Activated T-helper 1 cell treated with anti-CD3 and anti-CD28 coated beads, Interleukin-12 subunit alpha, Interleukin-12 subunit beta, Interleukin-2, Interleukin-4 antibody, amounts not matched to agents 30 ng/mL and 10 ng/mL and 1 ng/mL, durations not matched to agents 14 hours and 24 hours and 36 hours (primary cell): ENCODE measurements at regions of chr1 and their contacts with region 1.

Region 1: GRCh38 chr1:33367485-33368405 is 46.8 kb upstream of the A3GALT2 start:
- DNase-seq: peak; percentile 73
- H3K4me3 Mint-ChIP-seq: no peak overlapping the region
- H3K27ac Mint-ChIP-seq: no peak overlapping the region
- H3K4me1 Mint-ChIP-seq: no peaks in the 10 kb centered on the region
- H3K27me3 Mint-ChIP-seq: peaks cover 2% of the 10 kb centered on the region

Region 2: GRCh38 chr1:32870615-32871363 is 497.0 kb before region 1 on chr1 and contains the start of gene FNDC5:
- intact Hi-C with region 1: no loop called
- DNase-seq: no peak
- H3K4me3 Mint-ChIP-seq: peak within 1 kb of the TSS; percentile 56
- H3K27ac Mint-ChIP-seq: no peak within 1 kb of the TSS
- H3K4me1 Mint-ChIP-seq: peaks cover 6% of the 10 kb centered on the region
- H3K27me3 Mint-ChIP-seq: peaks cover 48% of the 10 kb centered on the region
- total RNA-seq, gene FNDC5: not detected in 2 replicates

Region 3: GRCh38 chr1:33111970-33112369 is 255.8 kb before region 1 on chr1:
- intact Hi-C with region 1: loop called (anchors 2 kb)
- DNase-seq: no peak
- H3K4me3 Mint-ChIP-seq: no peak overlapping the region
- H3K27ac Mint-ChIP-seq: no peak overlapping the region
- H3K4me1 Mint-ChIP-seq: peaks cover 10% of the 10 kb centered on the region
- H3K27me3 Mint-ChIP-seq: peaks cover 3% of the 10 kb centered on the region

Region 4: GRCh38 chr1:33384040-33384812 is 16.5 kb after region 1 on chr1:
- intact Hi-C with region 1: no loop called
- DNase-seq: no peak
- H3K4me3 Mint-ChIP-seq: no peak overlapping the region
- H3K27ac Mint-ChIP-seq: no peak overlapping the region
- H3K4me1 Mint-ChIP-seq: peaks cover 16% of the 10 kb centered on the region
- H3K27me3 Mint-ChIP-seq: peaks cover 27% of the 10 kb centered on the region